ENCODE measurements at regions of chr20 and their contacts with region 1.

Region 1: DNA sequence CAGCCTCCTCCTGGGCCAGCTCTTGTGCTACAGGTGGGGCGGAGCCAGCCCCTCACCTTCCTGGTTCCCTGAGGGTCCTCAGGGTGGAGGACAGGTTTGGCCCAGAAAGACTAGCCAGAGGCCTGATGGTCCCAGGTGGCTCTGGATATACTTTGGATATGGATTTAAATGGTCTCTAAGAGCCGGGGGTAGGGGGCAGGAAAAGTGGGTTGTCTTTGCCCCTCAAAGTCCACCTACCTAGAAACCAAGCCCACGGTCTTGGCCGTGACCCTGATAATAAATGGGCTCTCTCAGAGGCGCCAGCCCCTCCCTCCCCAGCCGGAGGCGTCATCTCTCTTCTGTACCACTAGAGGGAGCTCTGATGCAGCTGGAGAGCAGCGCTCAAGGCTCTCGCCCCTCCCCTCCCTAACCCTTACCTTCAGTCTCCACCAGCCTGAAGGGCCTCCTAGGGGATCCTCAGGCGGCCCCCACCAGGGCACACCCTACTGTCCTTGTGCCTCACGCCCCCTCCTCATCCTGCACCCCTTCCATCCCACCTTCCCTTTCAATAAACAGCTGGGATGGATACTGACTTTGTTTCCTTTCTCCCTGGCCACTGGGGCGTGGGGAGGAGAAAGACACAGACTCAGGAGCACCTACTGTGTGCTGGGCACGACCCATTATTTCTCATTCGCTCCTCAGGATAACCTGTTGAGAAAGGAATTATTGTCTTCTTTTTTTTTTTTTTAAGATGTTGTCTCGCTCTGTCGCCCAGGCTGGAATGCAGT is 7.6 kb downstream of the NRSN2 start:
- DNase-seq: peak; percentile 79
- H3K4me3 Mint-ChIP-seq: no peak overlapping the region
- H3K27ac Mint-ChIP-seq: no peak overlapping the region
- H3K4me1 Mint-ChIP-seq: no peaks in the 10 kb centered on the region
- H3K27me3 Mint-ChIP-seq: no peaks in the 10 kb centered on the region
- CTCF ChIP-seq: peak; percentile 96

Region 2: GRCh38 chr20:371755-372542 is 17.5 kb after region 1 on chr20:
- CTCF ChIA-PET with region 1: interaction called, 80 read pairs
- POLR2A ChIA-PET with region 1: interaction called, 671 read pairs
- intact Hi-C with region 1: no loop called
- DNase-seq: peak; percentile 100
- H3K4me3 Mint-ChIP-seq: peak overlapping the region; percentile 26
- H3K27ac Mint-ChIP-seq: peak overlapping the region; percentile 95
- H3K4me1 Mint-ChIP-seq: peaks cover 56% of the 10 kb centered on the region
- H3K27me3 Mint-ChIP-seq: no peaks in the 10 kb centered on the region
- CTCF ChIP-seq: no peak

Region 3: GRCh38 chr20:407133-407952 is 52.9 kb after region 1 on chr20:
- CTCF ChIA-PET with region 1: interaction called, 23 read pairs
- POLR2A ChIA-PET with region 1: interaction called, 8 read pairs
- intact Hi-C with region 1: no loop called
- DNase-seq: peak; percentile 76
- H3K4me3 Mint-ChIP-seq: peak overlapping the region; percentile 82
- H3K27ac Mint-ChIP-seq: peak overlapping the region; percentile 30
- H3K4me1 Mint-ChIP-seq: peaks cover 31% of the 10 kb centered on the region
- H3K27me3 Mint-ChIP-seq: no peaks in the 10 kb centered on the region
- CTCF ChIP-seq: peak; percentile 19

Region 4: GRCh38 chr20:438571-439469 is 84.3 kb after region 1 on chr20:
- CTCF ChIA-PET with region 1: interaction called, 118 read pairs
- POLR2A ChIA-PET with region 1: no interaction called
- intact Hi-C with region 1: no loop called
- DNase-seq: no peak
- H3K4me3 Mint-ChIP-seq: no peak overlapping the region
- H3K27ac Mint-ChIP-seq: no peak overlapping the region
- H3K4me1 Mint-ChIP-seq: peaks cover under 1% of the 10 kb centered on the region
- H3K27me3 Mint-ChIP-seq: no peaks in the 10 kb centered on the region
- CTCF ChIP-seq: no peak

Region 5: GRCh38 chr20:483813-484644 is 129.5 kb after region 1 on chr20:
- CTCF ChIA-PET with region 1: interaction called, 46 read pairs
- POLR2A ChIA-PET with region 1: no interaction called
- intact Hi-C with region 1: loop called (anchors 1 kb)
- DNase-seq: no peak
- H3K4me3 Mint-ChIP-seq: no peak overlapping the region
- H3K27ac Mint-ChIP-seq: no peak overlapping the region
- H3K4me1 Mint-ChIP-seq: peaks cover 5% of the 10 kb centered on the region
- H3K27me3 Mint-ChIP-seq: no peaks in the 10 kb centered on the region
- CTCF ChIP-seq: no peak

Region 6: GRCh38 chr20:667391-667964 is 313.0 kb after region 1 on chr20:
- CTCF ChIA-PET with region 1: interaction called, 4 read pairs
- POLR2A ChIA-PET with region 1: no interaction called
- intact Hi-C with region 1: loop called (anchors 5 kb)
- DNase-seq: peak; percentile 55
- H3K4me3 Mint-ChIP-seq: no peak overlapping the region
- H3K27ac Mint-ChIP-seq: no peak overlapping the region
- H3K4me1 Mint-ChIP-seq: no peaks in the 10 kb centered on the region
- H3K27me3 Mint-ChIP-seq: peaks cover 41% of the 10 kb centered on the region
- CTCF ChIP-seq: peak; percentile 86

Measured in MCF 10A (cell line).